A549 (cell line): ENCODE measurements at regions of chr12 and their contacts with region 1.

Region 1: DNA sequence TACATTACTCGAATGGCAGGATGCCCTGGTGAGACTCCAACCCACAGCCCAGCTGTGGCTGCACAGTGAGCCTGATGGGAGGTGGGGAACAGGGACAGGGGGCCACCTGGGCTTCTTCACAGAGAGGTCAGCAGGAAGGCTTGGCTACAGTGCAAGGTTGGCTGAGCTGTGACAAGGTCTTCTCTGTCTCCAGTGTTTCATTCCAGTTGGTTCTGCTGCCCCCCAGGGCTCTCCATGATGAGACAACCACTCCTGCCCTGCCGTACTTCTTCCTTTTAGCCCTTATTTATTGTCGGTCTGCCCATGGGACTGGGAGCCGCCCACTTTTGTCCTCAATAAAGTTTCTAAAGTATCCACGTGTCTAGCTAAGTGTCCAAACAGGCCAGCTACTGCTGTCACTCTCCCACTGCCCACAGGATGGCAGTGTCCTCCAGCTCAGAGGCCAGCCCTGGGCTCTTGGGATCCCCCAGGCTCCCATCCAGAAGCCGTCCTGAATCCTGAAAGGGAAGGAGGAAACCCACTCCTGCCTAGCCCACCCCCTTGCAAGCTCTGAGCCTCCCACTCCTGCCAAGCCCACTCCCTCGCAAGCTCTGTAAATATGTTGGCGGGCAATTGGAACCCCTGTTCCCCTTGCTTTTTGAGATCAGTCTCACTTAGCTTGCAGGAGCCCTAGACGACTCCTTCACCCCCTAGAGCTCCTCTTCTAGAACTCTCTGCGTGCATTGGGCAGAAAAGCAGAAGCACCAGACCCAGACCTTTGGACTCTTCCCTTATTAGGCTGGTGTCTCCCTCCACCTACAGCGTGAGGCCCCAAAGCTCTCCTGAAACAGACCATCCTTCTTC is 5.4 kb downstream of the C1QL4 start:
- DNase-seq: peak; percentile 83 to 90
- ATAC-seq: peak; percentile 88 to 93
- H3K4me3 ChIP-seq: no peak overlapping the region
- H3K27ac ChIP-seq: peak overlapping the region in 1 of 2 experiments; percentile 28; a peak in 1 of 6 replicates
- H3K4me1 ChIP-seq: peaks cover 6% of the 10 kb centered on the region; the same call in 2 of the 3 replicates
- CTCF ChIP-seq: peak; percentile 82
- EP300 ChIP-seq: no peak
- POLR2A ChIP-seq: no peak
- RAD21 ChIP-seq: peak; percentile 85 to 86

Region 2: GRCh38 chr12:49288412-49288853 is 43.2 kb before region 1 on chr12:
- CTCF ChIA-PET with region 1: interaction called, 61 read pairs
- POLR2A ChIA-PET with region 1: no interaction called
- DNase-seq: peak; percentile 66 to 70
- ATAC-seq: peak; percentile 47 to 66; a peak in 4 of 6 replicates
- H3K4me3 ChIP-seq: no peak overlapping the region
- H3K27ac ChIP-seq: no peak overlapping the region
- H3K4me1 ChIP-seq: 0 out of 3 replicates have a peak, but pooled peaks cover 12% of the 10 kb centered on the region
- CTCF ChIP-seq: peak; percentile 96
- EP300 ChIP-seq: no peak
- POLR2A ChIP-seq: no peak
- RAD21 ChIP-seq: peak; percentile 89 to 91

Region 3: GRCh38 chr12:49304161-49304560 is 27.4 kb before region 1 on chr12:
- CTCF ChIA-PET with region 1: interaction called, 11 read pairs
- POLR2A ChIA-PET with region 1: no interaction called
- DNase-seq: no peak
- ATAC-seq: peak in 1 of 2 experiments; percentile 37; a peak in 2 of 6 replicates
- H3K4me3 ChIP-seq: no peak overlapping the region
- H3K27ac ChIP-seq: no peak overlapping the region
- H3K4me1 ChIP-seq: no peaks in the 10 kb centered on the region
- CTCF ChIP-seq: no peak
- EP300 ChIP-seq: no peak
- POLR2A ChIP-seq: no peak
- RAD21 ChIP-seq: no peak

Region 4: DNA sequence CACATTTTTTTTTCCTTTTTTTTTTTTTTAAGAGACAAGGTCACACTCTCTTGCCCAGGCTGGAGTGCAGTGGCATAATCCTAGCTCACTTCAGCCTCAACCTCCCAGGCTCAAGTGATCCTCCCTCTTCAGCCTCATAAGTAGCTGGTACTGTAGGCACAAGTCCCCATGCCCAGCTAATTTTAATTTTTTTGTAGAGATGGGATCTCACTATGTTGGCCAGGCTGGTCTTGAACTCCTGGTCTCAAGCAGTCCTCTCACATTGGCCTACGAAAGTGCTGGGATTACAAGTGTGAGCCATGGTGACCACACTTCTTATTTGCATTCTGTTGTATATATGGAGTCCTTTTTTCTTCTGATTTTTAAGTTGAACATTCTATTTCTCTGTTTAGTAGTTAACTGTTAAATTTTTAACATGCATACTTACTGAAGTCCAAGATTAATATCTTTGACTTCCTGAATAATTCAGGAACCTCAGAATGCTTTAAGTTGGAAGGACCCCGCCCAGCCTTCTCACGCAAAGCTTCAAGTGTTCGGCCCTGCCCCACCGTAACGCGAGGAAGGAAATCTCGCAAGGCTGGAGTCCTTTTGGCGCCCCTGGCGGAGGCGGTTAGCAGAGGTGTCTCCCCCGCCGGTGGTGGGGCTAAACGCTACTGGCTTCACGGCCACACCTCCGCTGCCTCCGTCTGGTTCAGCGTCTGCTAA is 57.2 kb after region 1 on chr12:
- CTCF ChIA-PET with region 1: no interaction called
- POLR2A ChIA-PET with region 1: no interaction called
- DNase-seq: no peak
- ATAC-seq: no peak
- H3K4me3 ChIP-seq: no peak overlapping the region
- H3K27ac ChIP-seq: no peak overlapping the region
- H3K4me1 ChIP-seq: no peaks in the 10 kb centered on the region
- CTCF ChIP-seq: no peak
- EP300 ChIP-seq: no peak
- POLR2A ChIP-seq: no peak
- RAD21 ChIP-seq: no peak

Region 5: DNA sequence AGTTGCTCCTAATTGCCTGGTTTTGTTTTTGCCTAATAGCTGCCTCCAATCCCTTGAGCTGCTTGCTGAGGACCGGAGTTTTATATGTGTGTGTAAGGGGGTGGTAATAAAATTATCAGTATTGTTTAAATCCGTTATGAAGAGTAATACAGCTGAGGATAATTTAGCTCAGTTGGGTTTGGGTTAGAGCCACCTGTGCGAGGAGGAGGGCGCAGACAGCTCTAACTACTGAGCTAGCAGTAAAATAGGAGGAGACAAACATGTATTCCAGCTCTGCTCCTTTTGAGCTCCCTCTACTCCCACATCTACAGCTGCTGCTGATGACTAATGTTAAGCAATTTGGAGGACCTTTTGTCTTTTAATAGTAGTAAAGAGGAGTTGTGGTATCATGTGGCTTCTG is 97.2 kb after region 1 on chr12:
- CTCF ChIA-PET with region 1: no interaction called
- POLR2A ChIA-PET with region 1: no interaction called
- DNase-seq: peak; percentile 14 to 31
- ATAC-seq: peak; percentile 64 to 85; a peak in 5 of 6 replicates
- H3K4me3 ChIP-seq: no peak overlapping the region
- H3K27ac ChIP-seq: 0 out of 6 replicates have a peak overlapping the region, but pooled peaks of 1 of the 2 experiments have one; percentile 19
- H3K4me1 ChIP-seq: peaks cover 17% of the 10 kb centered on the region
- CTCF ChIP-seq: no peak
- EP300 ChIP-seq: no peak
- POLR2A ChIP-seq: no peak
- RAD21 ChIP-seq: no peak

Region 6: DNA sequence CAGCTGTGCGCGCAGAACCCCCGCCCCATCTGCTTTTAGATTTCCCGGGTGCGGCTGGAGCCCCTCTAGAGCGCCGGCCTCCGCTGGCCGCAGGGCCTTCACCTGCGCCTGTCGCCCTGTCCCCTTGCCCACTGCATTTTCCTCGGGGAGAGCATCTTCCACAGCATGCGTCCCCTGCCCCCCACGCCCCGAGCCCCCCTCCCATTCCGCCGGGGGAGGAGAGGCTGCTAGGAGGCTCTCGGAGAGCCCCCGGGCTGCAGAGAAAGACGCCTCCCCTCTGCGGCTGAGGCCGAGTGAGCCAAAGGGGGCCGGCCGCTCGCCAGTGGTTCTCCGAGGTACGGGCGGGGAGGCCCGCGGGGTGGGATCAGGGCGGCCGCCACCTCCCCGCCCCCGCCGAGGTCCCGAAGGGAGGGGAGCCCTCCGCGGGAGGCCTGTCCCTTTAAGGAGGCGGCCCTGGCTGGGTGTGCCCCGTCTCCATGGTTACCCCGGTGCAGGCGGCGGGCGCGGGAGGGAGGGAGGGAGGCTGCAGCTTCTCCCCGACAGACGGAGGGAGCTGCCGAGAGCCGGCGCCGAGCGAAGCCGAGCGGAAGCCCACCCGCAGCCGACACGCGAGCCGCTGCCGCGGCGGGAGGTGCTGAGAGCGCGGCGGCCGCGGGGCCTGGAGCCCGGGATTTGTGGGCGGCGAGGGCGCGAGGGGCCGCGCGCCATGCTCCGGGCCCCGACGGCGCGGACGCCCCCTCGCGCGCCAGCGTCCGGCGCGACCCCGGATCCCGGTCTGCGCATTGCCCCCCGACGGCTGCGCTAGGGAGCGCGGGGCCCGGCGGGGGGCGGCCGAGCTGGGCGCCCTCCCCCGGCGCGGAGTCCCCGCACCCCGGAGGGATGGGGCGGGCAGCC is 207.2 kb after region 1 on chr12 and contains the start of gene KCNH3:
- CTCF ChIA-PET with region 1: interaction called, 12 read pairs
- POLR2A ChIA-PET with region 1: no interaction called
- DNase-seq: peak; percentile 71 to 88
- ATAC-seq: peak; percentile 72 to 77
- H3K4me3 ChIP-seq: peak within 1 kb of the TSS; percentile 76
- H3K27ac ChIP-seq: peak within 1 kb of the TSS; percentile 65 to 91
- H3K4me1 ChIP-seq: peaks cover 32% of the 10 kb centered on the region
- CTCF ChIP-seq: no peak
- EP300 ChIP-seq: no peak
- POLR2A ChIP-seq: no peak
- RAD21 ChIP-seq: no peak
- polyA plus RNA-seq, gene KCNH3: 1.0 and 1.2 TPM in 2 replicates

Region 7: GRCh38 chr12:49567611-49568441 is 236.2 kb after region 1 on chr12 and contains the start of gene MCRS1:
- CTCF ChIA-PET with region 1: interaction called, 10 read pairs
- POLR2A ChIA-PET with region 1: interaction called, 5 read pairs
- DNase-seq: peak; percentile 94 to 99
- ATAC-seq: peak; percentile 89 to 90
- H3K4me3 ChIP-seq: peak within 1 kb of the TSS; percentile 65
- H3K27ac ChIP-seq: peak within 1 kb of the TSS; percentile 95 to 99
- H3K4me1 ChIP-seq: peaks cover 13% of the 10 kb centered on the region
- CTCF ChIP-seq: no peak
- EP300 ChIP-seq: no peak
- POLR2A ChIP-seq: peak; percentile 63
- RAD21 ChIP-seq: no peak
- polyA plus RNA-seq, gene MCRS1: 68.5 and 69.4 TPM in 2 replicates

Region 8: DNA sequence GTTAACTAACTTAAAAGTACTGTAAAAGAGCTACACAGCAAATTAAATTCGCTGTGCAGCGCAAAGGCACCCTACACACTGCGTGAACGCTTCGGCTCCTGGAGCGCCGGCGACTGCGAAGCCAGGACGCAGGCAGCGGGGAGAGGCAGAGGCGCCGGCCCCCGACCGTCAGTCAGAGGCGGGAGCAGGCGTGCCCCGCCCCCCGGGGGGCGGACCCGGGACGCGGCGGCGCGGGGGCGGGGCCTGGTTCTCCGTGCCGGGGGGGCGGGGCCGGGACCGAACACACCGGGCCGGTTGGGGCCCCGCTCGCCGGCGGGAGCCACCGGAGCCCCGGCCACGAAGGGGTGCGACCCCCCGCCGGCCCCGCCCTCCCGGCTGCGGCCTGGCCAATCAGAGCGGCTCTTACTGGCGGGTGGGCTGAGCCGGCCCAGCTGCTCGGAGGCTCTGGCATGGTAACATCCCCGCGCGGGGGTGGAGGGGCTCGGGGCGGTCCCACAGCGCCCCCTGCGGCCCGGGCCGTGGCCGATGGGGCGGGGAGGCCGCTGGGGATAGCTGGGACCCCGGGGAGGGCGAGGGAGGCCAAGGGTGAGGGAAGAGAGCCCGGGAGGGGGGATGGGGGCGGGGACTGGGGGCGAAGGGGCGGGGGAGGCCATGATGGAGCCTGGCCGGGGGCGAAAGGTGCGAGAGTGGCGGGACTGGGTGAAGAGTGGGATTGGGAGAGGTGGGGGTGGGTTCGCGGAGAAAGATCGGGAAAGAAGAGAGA is 291.7 kb after region 1 on chr12 and contains the start of gene PRPF40B:
- CTCF ChIA-PET with region 1: interaction called, 10 read pairs
- POLR2A ChIA-PET with region 1: no interaction called
- DNase-seq: peak; percentile 87 to 95
- ATAC-seq: peak; percentile 88 to 89
- H3K4me3 ChIP-seq: peak within 1 kb of the TSS; percentile 63
- H3K27ac ChIP-seq: peak within 1 kb of the TSS; percentile 79 to 90
- H3K4me1 ChIP-seq: peaks cover 39% of the 10 kb centered on the region
- CTCF ChIP-seq: peak; percentile 64
- EP300 ChIP-seq: no peak
- POLR2A ChIP-seq: peak; percentile 93
- RAD21 ChIP-seq: peak; percentile 23 to 51; a peak in 3 of 5 replicates
- polyA plus RNA-seq, gene PRPF40B: 17.0 TPM in 2 replicates